BJ (cell line): ENCODE measurements at regions of chr15 and their contacts with region 1.

Region 1: DNA sequence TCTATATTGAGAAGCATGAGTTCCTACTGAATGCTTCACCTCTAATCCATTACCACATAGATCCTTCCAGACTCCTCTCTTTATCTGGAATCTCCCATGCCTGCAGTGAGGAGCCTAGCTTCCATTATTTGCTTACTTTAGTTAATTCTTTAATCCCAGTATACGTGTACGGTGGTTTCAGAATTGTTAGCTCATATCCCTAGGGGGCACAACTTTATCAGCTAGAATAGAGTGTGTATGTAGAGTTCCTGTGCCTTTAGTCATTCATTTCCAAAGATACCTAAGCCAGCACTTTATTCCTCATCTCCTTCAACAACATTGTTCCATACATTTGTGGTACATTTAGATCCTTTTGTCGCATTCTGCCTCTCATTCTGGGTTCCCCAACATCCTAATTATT is 226.0 kb downstream of the TJP1 start:
- DNase-seq: peak; percentile 4
- H3K4me3 ChIP-seq: no peak overlapping the region
- H3K27me3 ChIP-seq: no peaks in the 10 kb centered on the region; the same call in 1 of the 2 replicates
- CTCF ChIP-seq: peak; percentile 54

Region 2: GRCh38 chr15:29452881-29453731 is 143.2 kb before region 1 on chr15:
- CTCF ChIA-PET with region 1: no interaction called
- POLR2A ChIA-PET with region 1: no interaction called
- DNase-seq: no peak
- H3K4me3 ChIP-seq: no peak overlapping the region
- H3K27me3 ChIP-seq: no peaks in the 10 kb centered on the region
- CTCF ChIP-seq: no peak

Region 3: DNA sequence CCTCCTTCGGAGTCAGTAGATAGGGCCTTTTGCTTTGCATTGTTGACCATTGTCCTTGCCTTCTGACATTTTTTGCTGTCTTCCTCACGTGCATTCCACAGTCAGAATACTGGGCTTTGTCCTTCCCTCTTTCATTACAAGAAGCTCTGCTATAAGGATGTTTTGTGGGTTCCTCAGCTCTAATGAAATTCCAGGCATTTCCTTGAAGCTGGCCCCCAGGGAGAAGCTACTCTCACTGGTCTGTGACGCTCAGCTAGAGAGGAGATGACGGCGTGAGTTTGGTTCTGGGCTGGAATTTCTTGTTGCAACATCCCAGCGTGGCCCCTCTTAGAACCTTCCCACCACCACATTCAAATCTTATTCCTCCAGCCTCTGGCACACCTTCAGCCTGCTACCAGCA is 15.8 kb after region 1 on chr15:
- CTCF ChIA-PET with region 1: interaction called, 11 read pairs
- POLR2A ChIA-PET with region 1: no interaction called
- DNase-seq: peak; percentile 49
- H3K4me3 ChIP-seq: no peak overlapping the region
- H3K27me3 ChIP-seq: no peaks in the 10 kb centered on the region
- CTCF ChIP-seq: no peak